Gastrocnemius medialis (tissue), 4 donors: ENCODE measurements at regions of chr5 and their contacts with region 1.

Region 1: DNA sequence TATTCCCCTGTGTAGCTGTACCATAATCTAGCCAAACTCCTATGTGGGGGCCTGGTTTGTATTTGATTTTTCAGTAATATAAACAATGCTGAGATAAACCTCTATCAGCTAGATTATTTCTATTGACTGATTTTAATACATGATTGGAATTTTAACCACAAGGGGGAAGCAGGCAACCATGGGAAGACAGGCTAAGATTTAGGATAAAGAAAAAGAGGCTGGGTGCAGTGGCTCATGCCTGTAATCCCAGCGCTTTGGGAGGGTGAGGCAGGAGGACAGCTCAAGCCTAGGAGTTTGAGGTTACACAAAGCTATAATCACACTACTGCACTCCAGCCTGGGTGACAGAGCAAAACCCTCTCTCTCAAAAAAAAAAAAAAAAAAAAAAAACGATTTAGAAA is 18.1 kb upstream of the GPX3 start:
- DNase-seq: peak in 1 of 2 donors; percentile 34
- ATAC-seq: peak in 1 of 2 donors; percentile 35
- H3K4me3 ChIP-seq: no peak overlapping the region
- H3K27ac ChIP-seq: no peak overlapping the region
- H3K4me1 ChIP-seq: peaks cover 32 to 41% of the 10 kb centered on the region in 2 donors
- H3K27me3 ChIP-seq: no peaks in the 10 kb centered on the region
- CTCF ChIP-seq: peak; percentile 67 to 81 (median 73)
- POLR2A ChIP-seq: no peak

Region 2: DNA sequence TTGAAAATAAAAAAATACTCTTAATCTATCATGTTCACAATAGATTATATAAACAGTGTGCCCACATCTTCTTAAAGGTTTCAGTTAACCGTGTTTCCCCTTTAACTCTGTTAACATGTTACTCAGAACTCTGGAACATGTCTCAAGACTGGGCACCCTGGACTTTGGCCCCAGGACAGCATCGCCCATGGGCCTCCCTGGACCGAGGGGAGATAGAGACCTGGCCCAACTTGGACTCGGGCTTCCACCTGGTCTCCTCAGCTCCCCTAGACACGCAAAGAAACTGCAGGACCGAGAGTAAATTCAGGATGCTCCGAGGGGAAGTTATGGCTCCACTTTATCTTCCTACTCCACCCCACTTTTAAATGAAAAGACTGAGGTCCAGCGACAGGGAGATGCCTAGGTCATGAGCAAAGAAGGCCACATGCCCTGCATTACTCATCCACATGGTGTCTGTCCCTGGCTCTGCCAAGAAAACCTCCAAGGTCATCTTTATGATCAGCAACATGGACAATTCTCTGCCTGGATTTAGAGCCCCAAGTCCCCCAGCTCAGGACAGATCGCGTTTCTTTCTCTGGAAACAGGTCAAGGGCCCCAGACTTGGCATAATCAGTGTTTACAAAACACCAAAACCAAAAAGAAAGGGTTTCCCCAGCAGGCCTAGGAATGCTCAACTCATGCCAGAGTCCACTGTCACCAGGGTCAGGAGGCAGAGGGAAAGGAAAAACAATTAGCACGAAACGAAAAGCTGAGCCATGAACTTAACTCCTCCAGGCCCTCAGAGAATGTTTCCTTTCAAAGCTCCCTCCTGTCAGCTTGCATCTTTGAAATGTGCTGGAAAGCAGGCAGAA is 35.5 kb after region 1 on chr5:
- in situ Hi-C with region 1: loop called in 1 of 4 experiments (anchors 5 kb)
- intact Hi-C with region 1: no loop called
- DNase-seq: peak; percentile 81 to 84
- ATAC-seq: peak; percentile 41 to 54
- H3K4me3 ChIP-seq: no peak overlapping the region
- H3K27ac ChIP-seq: peak overlapping the region; percentile 88 to 98 (median 95)
- H3K4me1 ChIP-seq: peaks cover 48 to 54% of the 10 kb centered on the region in 2 donors
- H3K27me3 ChIP-seq: no peaks in the 10 kb centered on the region
- CTCF ChIP-seq: no peak
- POLR2A ChIP-seq: peak in 1 of 2 donors; percentile 41

Region 3: DNA sequence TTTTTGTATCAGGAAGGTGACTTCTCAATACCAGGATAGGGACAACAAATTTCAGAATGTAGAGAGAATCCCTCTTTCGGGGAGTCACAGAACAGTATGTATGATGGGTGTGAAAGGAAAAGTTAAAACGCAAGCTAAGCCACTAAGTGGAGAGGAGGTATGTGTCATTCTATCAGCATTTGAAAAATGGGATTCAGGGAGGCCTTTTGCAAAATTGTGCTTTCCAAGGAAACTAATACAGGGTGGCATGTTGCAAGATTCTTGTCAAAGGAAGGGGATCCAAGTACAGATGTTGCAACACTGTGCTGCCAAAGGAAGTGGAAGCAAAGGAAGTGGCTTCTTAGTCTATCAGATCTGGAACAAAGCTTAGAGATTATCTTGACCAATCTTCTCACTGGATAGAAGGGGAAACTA is 91.2 kb after region 1 on chr5:
- in situ Hi-C with region 1: loop called in 1 of 4 experiments (anchors 10 kb)
- intact Hi-C with region 1: no loop called
- DNase-seq: peak; percentile 66 to 77
- ATAC-seq: peak; percentile 83 to 88
- H3K4me3 ChIP-seq: no peak overlapping the region
- H3K27ac ChIP-seq: peak overlapping the region; percentile 70 to 73 (median 72)
- H3K4me1 ChIP-seq: peaks cover 31 to 37% of the 10 kb centered on the region in 2 donors
- H3K27me3 ChIP-seq: no peaks in the 10 kb centered on the region
- CTCF ChIP-seq: no peak
- POLR2A ChIP-seq: no peak

Region 4: GRCh38 chr5:151115274-151115905 is 113.1 kb after region 1 on chr5:
- in situ Hi-C with region 1: loop called in 1 of 4 experiments (anchors 5 kb)
- intact Hi-C with region 1: loop called (anchors 1 kb)
- DNase-seq: peak; percentile 50 to 71
- ATAC-seq: peak; percentile 54 to 59
- H3K4me3 ChIP-seq: no peak overlapping the region
- H3K27ac ChIP-seq: peak overlapping the region; percentile 10 to 32 (median 28)
- H3K4me1 ChIP-seq: peaks cover 15 to 20% of the 10 kb centered on the region in 2 donors
- H3K27me3 ChIP-seq: no peaks in the 10 kb centered on the region
- CTCF ChIP-seq: peak; percentile 95 to 99 (median 96)
- POLR2A ChIP-seq: no peak